Mammary epithelial cell (primary cell): ENCODE measurements at regions of chr15 and their contacts with region 1.

Region 1: GRCh38 chr15:69107026-69107620 is 53.3 kb upstream of the GLCE start:
- DNase-seq: no peak
- H3K4me3 ChIP-seq: no peak overlapping the region
- H3K27ac ChIP-seq: no peak overlapping the region
- H3K4me1 ChIP-seq: no peaks in the 10 kb centered on the region
- H3K27me3 ChIP-seq: no peaks in the 10 kb centered on the region
- CTCF ChIP-seq: no peak

Region 2: GRCh38 chr15:69141286-69141701 is 34.2 kb after region 1 on chr15:
- CTCF ChIA-PET with region 1: no interaction called
- dilution Hi-C with region 1: loop called (anchors 5 kb)
- in situ Hi-C with region 1: no loop called
- intact Hi-C with region 1: no loop called
- DNase-seq: no peak
- H3K4me3 ChIP-seq: no peak overlapping the region
- H3K27ac ChIP-seq: no peak overlapping the region
- H3K4me1 ChIP-seq: no peaks in the 10 kb centered on the region
- H3K27me3 ChIP-seq: peaks cover 2% of the 10 kb centered on the region
- CTCF ChIP-seq: no peak